GM12878 (cell line): ENCODE measurements at regions of chr6 and their contacts with region 1.

Region 1: GRCh38 chr6:13229205-13230085 is 98.9 kb downstream of the TBC1D7 start:
- DNase-seq: peak; percentile 88
- ATAC-seq: peak; percentile 94
- H3K4me3 ChIP-seq: peak overlapping the region; percentile 57
- H3K27ac ChIP-seq: peak overlapping the region; percentile 38
- H3K4me1 ChIP-seq: peaks cover 27% of the 10 kb centered on the region
- H3K27me3 ChIP-seq: no peaks in the 10 kb centered on the region
- CTCF ChIP-seq: peak; percentile 52 to 87 (median 79)
- EP300 ChIP-seq: peak; percentile 60 to 71; a peak in 3 of 4 replicates
- POLR2A ChIP-seq: peak; percentile 21; the same call in 1 of the 2 replicates
- RAD21 ChIP-seq: peak; percentile 85

Region 2: GRCh38 chr6:13194852-13195251 is 34.6 kb before region 1 on chr6:
- CTCF ChIA-PET with region 1: interaction called, 37 read pairs
- POLR2A ChIA-PET with region 1: no interaction called
- RAD21 ChIA-PET with region 1: interaction called, 15 read pairs
- SMC1A ChIA-PET with region 1: interaction called, 28 read pairs
- in situ Hi-C with region 1: no loop called
- intact Hi-C with region 1: no loop called
- DNase-seq: no peak
- ATAC-seq: peak; percentile 89
- H3K4me3 ChIP-seq: no peak overlapping the region
- H3K27ac ChIP-seq: no peak overlapping the region
- H3K4me1 ChIP-seq: no peaks in the 10 kb centered on the region
- H3K27me3 ChIP-seq: peaks cover 1 to 10% of the 10 kb centered on the region in 2 experiments; a peak in 3 of 4 replicates
- CTCF ChIP-seq: peak; percentile 68 to 76 (median 75)
- EP300 ChIP-seq: no peak
- POLR2A ChIP-seq: no peak
- RAD21 ChIP-seq: peak; percentile 92

Region 3: GRCh38 chr6:13248053-13248452 is 18.6 kb after region 1 on chr6:
- CTCF ChIA-PET with region 1: interaction called, 5 read pairs
- POLR2A ChIA-PET with region 1: interaction called, 4 read pairs
- RAD21 ChIA-PET with region 1: interaction called, 4 read pairs
- SMC1A ChIA-PET with region 1: interaction called, 11 read pairs
- in situ Hi-C with region 1: no loop called
- intact Hi-C with region 1: no loop called
- DNase-seq: no peak
- ATAC-seq: no peak
- H3K4me3 ChIP-seq: no peak overlapping the region
- H3K27ac ChIP-seq: no peak overlapping the region
- H3K4me1 ChIP-seq: no peaks in the 10 kb centered on the region
- H3K27me3 ChIP-seq: no peaks in the 10 kb centered on the region
- CTCF ChIP-seq: no peak
- EP300 ChIP-seq: no peak
- POLR2A ChIP-seq: no peak
- RAD21 ChIP-seq: no peak

Region 4: DNA sequence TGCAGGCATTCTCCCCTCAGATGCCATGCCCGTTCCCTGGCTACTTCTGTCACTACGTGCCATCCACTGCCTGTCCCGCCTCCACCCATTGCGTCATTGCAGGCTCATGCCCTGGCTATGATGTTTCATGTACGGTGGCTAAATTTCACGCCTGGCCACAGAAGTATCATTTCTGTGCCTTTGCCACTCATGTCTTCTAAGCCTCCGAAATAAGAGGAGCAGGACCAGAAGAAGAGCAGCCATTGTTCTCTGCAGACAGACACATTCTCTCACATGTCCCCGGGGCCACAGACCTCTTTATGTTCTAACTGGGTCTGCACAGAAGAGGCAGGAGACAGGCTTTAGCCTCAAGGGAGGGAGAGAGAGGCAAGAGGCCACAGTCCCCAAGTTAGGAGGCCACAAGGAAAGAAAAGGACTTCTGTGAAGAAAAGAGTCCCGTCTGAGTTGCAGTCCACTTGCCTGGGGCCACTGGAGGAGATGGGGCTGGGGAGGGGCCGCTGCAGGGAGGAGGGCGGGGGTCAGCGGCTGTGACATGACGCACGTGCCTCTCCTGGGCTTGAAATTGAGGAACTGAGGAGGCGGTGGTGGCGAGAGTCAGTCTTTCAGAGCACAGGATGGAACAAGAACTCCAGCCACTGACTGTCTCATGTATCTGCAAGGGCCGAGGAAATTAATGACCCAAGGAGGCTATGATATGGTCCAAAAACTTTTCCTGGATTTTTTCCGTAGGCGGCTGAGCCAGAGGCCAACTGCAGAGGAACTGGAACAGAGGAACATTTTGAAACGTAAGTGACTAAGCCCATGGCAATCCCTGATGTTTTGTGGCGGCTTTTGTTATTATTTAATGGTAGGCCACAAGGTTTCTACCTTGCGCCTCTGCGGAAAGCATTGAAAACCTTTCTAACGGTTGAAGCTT is 42.9 kb after region 1 on chr6:
- CTCF ChIA-PET with region 1: interaction called, 108 read pairs
- POLR2A ChIA-PET with region 1: interaction called, 11 read pairs
- RAD21 ChIA-PET with region 1: interaction called, 31 read pairs
- SMC1A ChIA-PET with region 1: interaction called, 49 read pairs
- in situ Hi-C with region 1: no loop called
- intact Hi-C with region 1: loop called (anchors 1 kb)
- DNase-seq: peak; percentile 67
- ATAC-seq: peak; percentile 72
- H3K4me3 ChIP-seq: peak overlapping the region; percentile 82
- H3K27ac ChIP-seq: peak overlapping the region; percentile 92
- H3K4me1 ChIP-seq: peaks cover 20% of the 10 kb centered on the region
- H3K27me3 ChIP-seq: no peaks in the 10 kb centered on the region; a peak in 1 of 4 replicates
- CTCF ChIP-seq: peak in 2 of 3 experiments; percentile 20 to 37; a peak in 3 of 6 replicates
- EP300 ChIP-seq: peak; percentile 53 to 72; a peak in 1 of 4 replicates
- POLR2A ChIP-seq: peak; percentile 86
- RAD21 ChIP-seq: peak; percentile 44; the same call in 1 of the 2 replicates

Region 5: DNA sequence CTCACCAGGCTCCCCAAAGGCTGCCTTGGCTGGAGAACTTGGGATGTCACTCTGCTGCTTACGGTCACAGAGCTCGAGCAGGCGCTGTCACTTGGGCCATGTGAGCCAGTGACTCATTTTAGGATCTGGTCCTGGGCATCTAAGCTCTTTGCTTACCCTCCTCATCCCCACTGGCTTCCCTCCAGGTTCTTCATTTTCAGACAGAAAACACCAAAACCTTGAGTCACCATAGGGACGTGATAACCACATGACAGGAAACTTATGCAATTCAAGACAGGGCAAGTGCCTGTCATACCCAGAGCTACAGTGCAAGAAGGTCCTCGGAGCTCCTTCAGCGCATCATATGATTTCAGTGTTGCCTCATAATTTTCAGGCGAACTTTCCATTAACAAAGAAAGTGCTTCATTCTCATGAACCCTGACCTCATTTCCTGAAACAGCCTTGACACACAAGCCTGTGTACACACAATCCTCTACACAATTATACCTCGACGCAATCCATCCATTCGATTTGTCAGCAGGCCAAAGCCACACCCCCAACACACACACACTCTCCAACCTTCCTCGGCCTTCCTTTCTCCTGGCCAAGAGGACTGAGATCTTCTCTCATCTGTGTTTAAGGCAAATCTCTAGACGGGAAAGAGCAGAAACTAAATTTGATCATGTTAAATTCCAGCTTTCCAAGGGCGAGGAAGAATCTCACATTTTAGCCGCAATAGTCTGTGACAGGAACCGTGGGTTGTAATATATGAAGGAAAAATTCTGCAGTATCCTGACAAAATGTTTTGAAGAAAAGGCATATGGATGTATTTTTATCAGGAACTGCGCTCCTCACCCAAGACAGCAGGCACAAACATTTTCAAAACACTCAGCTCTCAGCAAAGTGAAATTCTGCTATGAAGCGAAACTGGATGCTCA is 73.6 kb after region 1 on chr6:
- CTCF ChIA-PET with region 1: interaction called, 20 read pairs
- POLR2A ChIA-PET with region 1: interaction called, 13 read pairs
- RAD21 ChIA-PET with region 1: interaction called, 24 read pairs
- SMC1A ChIA-PET with region 1: interaction called, 46 read pairs
- in situ Hi-C with region 1: no loop called
- intact Hi-C with region 1: loop called (anchors 1 kb)
- DNase-seq: peak; percentile 90
- ATAC-seq: peak; percentile 86
- H3K4me3 ChIP-seq: peak overlapping the region; percentile 34
- H3K27ac ChIP-seq: peak overlapping the region; percentile 90
- H3K4me1 ChIP-seq: peaks cover 33% of the 10 kb centered on the region
- H3K27me3 ChIP-seq: no peaks in the 10 kb centered on the region
- CTCF ChIP-seq: no peak
- EP300 ChIP-seq: peak in 1 of 2 experiments; percentile 74; a peak in 3 of 4 replicates
- POLR2A ChIP-seq: no peak; the same call in 1 of the 2 replicates
- RAD21 ChIP-seq: no peak